ENCODE measurements at regions of chr6 and their contacts with region 1.

Region 1: DNA sequence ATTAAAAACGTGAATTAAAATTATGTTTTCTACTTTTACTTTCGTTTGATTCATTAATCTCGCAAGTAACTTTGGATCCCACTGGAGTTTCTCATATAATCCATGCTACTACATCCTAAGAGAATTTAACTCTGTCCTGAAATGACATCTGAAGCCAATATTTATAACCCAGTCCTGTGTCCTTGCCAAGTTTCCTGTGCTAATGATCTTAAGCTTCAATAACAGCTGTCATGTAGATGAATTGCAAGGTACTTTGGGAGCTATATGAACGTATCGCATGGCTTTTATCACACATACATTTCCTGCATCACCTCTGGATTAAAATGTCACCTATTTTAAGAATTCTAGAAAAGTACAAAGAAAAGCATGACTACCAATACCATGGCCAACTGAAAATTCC is 833.8 kb upstream of the CITED2 start:
- DNase-seq: no peak
- H3K4me3 ChIP-seq: no peak overlapping the region
- H3K27me3 ChIP-seq: no peaks in the 10 kb centered on the region
- CTCF ChIP-seq: no peak

Region 2: GRCh38 chr6:140236732-140237131 is 28.4 kb after region 1 on chr6:
- CTCF ChIA-PET with region 1: no interaction called
- POLR2A ChIA-PET with region 1: no interaction called
- DNase-seq: no peak
- H3K4me3 ChIP-seq: no peak overlapping the region
- H3K27me3 ChIP-seq: no peaks in the 10 kb centered on the region
- CTCF ChIP-seq: no peak

Region 3: DNA sequence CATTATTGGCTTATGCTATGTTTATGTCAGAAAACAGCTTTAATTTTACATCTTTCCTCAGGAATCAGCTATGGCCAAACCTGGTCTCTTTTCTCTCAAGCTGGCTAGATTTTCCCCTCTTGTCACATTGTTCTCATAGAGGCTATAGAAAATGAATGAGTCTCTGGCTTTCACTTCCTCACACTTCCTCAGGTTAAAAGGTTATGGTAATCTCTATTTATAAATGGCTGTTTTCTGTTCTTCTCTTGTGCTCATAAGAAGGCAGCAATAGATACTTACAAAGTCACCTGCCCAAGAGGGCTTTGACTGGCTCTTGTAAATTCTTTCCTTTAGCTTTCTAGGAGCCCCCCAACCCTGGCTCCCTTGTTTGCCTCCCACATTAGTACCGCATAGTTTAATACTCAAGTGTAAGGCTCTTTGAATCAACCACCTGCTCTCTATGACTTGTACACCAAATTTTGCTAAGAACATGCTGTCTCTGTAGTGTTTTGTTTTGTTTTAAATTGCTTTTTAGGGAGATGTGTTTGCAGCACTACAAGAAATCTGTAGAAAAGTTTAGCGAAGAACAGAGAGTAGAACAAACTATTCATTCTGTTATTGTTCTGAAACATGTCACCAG is 63.6 kb after region 1 on chr6:
- CTCF ChIA-PET with region 1: no interaction called
- POLR2A ChIA-PET with region 1: no interaction called
- DNase-seq: no peak
- H3K4me3 ChIP-seq: no peak overlapping the region
- H3K27me3 ChIP-seq: no peaks in the 10 kb centered on the region
- CTCF ChIP-seq: no peak

Region 4: DNA sequence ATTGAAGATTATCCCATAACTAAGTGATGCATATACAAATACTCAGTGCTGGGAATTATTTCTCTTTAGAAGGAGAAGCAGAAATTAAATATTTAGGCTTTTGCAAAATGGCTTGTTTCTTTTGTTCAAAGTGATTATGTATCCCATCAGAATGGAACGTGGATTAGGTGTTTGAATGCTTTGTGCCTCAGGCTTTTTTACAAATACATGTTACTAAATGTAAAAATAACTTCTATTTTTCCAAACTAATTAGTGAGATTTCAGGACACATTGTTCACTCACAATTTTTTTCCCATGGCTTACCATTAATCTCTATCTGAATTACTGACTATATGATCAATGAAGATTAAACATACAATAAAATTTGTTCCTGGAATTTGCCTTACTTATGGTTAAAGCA is 92.0 kb after region 1 on chr6:
- CTCF ChIA-PET with region 1: no interaction called
- POLR2A ChIA-PET with region 1: interaction called, 17 read pairs
- DNase-seq: no peak
- H3K4me3 ChIP-seq: no peak overlapping the region
- H3K27me3 ChIP-seq: no peaks in the 10 kb centered on the region
- CTCF ChIP-seq: no peak